ENCODE measurements at regions of chr22 and their contacts with region 1.

Region 1: DNA sequence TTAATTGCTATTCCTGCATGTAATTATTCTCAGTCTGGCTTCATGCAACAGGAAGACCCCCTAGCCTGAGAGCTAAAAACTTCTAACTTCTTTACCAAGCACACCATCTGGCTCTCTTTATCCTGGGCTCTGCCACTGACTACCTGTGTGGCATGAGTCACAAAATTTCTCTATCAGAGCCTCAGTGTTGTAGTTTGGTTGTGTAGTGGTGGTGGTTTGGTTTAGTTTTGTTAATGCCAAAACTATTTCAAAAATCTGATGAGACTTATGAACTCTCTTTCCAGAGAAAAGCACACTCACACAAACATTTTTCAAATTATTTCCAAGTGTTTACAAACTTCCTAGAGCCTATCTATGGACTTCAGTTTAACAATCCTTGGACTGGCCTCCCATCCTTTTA is 7.5 kb upstream of the IL17RA start:
- DNase-seq: no peak
- H3K4me3 Mint-ChIP-seq: no peak overlapping the region
- H3K27ac Mint-ChIP-seq: no peak overlapping the region
- H3K4me1 Mint-ChIP-seq: peaks cover 18% of the 10 kb centered on the region
- H3K27me3 Mint-ChIP-seq: peaks cover 34% of the 10 kb centered on the region

Region 2: DNA sequence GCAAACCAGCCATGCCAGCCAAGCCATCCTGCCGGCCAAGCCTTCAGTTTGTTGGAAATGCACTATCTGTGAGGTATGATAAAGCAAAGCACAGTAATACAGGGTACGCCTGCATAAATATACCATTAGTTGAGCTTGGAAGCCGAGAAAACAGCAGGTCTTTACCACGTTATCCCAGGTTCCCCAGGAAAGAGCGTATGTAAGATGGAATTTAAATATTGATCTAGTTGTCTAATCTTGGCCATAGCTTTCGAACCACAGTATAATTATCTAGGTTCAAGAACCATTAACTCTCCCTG is 508.8 kb before region 1 on chr22:
- CTCF ChIA-PET with region 1: no interaction called
- POLR2A ChIA-PET with region 1: no interaction called
- DNase-seq: no peak
- H3K4me3 Mint-ChIP-seq: no peak overlapping the region
- H3K27ac Mint-ChIP-seq: no peak overlapping the region
- H3K4me1 Mint-ChIP-seq: no peaks in the 10 kb centered on the region
- H3K27me3 Mint-ChIP-seq: no peaks in the 10 kb centered on the region

Region 3: DNA sequence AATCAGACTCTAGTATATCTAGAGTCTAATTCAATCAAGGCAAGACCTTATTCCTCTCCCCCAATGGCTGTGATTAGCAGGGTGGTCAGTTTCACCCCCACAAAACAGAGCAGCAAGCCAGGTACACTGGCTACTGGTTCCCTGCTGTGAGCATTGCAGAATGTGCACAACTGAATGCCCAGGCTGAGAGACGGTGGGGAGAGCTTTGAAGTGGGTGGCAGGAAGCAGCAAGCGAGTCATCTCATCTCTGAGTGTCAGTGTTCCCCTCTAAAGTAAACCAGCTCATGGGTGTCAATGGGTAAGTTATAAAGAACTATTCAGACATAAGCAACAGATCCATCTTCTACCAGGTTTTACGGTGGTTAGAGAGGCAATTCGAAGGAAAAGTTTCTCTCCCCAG is 106.8 kb before region 1 on chr22:
- CTCF ChIA-PET with region 1: no interaction called
- POLR2A ChIA-PET with region 1: no interaction called
- DNase-seq: peak; percentile 29
- H3K4me3 Mint-ChIP-seq: no peak overlapping the region
- H3K27ac Mint-ChIP-seq: no peak overlapping the region
- H3K4me1 Mint-ChIP-seq: peaks cover 14% of the 10 kb centered on the region
- H3K27me3 Mint-ChIP-seq: no peaks in the 10 kb centered on the region

Region 4: GRCh38 chr22:17501679-17502285 is 424.5 kb after region 1 on chr22:
- CTCF ChIA-PET with region 1: interaction called, 14 read pairs
- POLR2A ChIA-PET with region 1: no interaction called
- DNase-seq: peak; percentile 59
- H3K4me3 Mint-ChIP-seq: no peak overlapping the region
- H3K27ac Mint-ChIP-seq: no peak overlapping the region
- H3K4me1 Mint-ChIP-seq: no peaks in the 10 kb centered on the region
- H3K27me3 Mint-ChIP-seq: peaks cover 2% of the 10 kb centered on the region

Measured in activated CD4-positive, alpha-beta T cell treated with anti-CD3 and anti-CD28 coated beads, Interleukin-2, amount 10 ng/mL, durations not matched to agents 7 days and 5 days (primary cell).